OCI-LY7 (cell line): ENCODE measurements at regions of chr17 and their contacts with region 1.

Region 1: DNA sequence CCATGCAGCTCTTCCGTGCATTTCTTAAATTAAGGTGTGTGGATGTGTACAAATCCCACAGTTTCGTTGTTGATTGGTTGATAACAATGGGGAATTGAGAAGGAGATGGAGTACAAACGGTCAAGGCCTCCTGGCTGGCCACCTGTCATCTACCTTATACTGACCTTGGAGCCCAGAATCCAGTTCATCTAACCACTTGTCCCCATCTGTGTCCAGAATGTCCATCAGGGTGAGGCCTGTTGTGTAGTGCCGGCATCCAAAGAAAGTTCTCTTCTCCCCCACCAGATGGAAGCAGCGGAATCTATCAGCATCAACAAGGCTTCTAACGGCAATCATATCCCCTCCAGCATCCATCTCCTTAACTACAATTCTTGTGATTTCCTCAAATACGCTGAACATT is 1.5 kb downstream of the GSDMB start:
- DNase-seq: no peak
- H3K4me3 ChIP-seq: no peak overlapping the region
- H3K27ac ChIP-seq: no peak overlapping the region
- H3K4me1 ChIP-seq: peaks cover 16% of the 10 kb centered on the region
- CTCF ChIP-seq: no peak

Region 2: GRCh38 chr17:39889200-39889599 is 27.7 kb before region 1 on chr17:
- CTCF ChIA-PET with region 1: no interaction called
- POLR2A ChIA-PET with region 1: no interaction called
- intact Hi-C with region 1: loop called (anchors 5 kb)
- DNase-seq: no peak
- H3K4me3 ChIP-seq: no peak overlapping the region
- H3K27ac ChIP-seq: no peak overlapping the region
- H3K4me1 ChIP-seq: peaks cover 9% of the 10 kb centered on the region
- CTCF ChIP-seq: no peak